Gastrocnemius medialis (tissue), 4 donors: ENCODE measurements at regions of chr19 and their contacts with region 1.

Region 1: DNA sequence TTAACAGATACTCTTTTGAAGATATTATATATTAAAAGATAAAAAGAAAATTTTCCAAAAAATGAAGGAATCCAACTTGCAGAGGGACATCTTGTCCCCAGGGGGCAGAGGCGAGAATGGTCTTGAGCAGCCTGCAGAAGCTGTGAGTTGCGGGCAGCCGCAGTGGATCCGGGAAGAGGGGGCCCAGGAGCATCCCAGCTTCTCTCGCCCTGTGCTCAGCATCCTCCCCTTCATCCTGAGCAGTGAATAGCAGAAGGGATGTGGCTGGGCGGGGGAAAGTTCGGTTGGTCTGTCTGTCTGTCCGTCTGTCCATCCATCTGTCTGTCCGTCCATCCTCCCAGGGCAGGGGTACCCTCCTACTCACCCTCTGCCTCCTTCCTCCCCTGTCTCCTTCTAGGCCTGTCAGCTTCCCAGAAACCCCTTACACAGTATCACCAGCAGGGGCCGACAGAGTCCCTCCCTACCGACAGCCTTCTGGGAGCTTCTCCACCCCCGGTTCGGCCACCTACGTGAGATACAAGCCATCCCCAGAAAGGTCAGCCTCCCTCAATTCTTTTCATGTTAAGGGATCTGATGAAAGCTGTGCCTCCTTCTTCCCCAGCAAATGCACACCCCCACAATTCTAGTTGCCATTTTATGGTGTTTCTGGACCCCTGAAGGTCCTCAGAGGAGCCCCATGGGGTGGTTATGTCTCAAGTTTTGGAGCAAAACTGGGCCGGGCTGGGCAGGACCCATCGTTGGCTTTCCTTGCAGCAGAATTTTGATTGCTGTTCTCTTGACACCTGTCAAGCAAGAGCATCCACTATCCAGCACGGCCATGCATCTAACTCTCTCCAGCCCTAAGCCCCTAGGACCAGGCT is 81.6 kb downstream of the DPF1 start:
- DNase-seq: peak; percentile 38 to 60
- ATAC-seq: peak; percentile 69 to 82
- H3K4me3 ChIP-seq: no peak overlapping the region
- H3K27ac ChIP-seq: no peak overlapping the region
- H3K4me1 ChIP-seq: peaks cover 0 to 11% of the 10 kb centered on the region in 2 donors
- H3K27me3 ChIP-seq: no peaks in the 10 kb centered on the region
- CTCF ChIP-seq: peak; percentile 52 to 81 (median 70)
- POLR2A ChIP-seq: no peak

Region 2: GRCh38 chr19:38229585-38230073 is 87.2 kb after region 1 on chr19:
- in situ Hi-C with region 1: no loop called
- intact Hi-C with region 1: loop called (anchors 5 kb)
- DNase-seq: no peak
- ATAC-seq: peak in 1 of 2 donors; percentile 27
- H3K4me3 ChIP-seq: no peak overlapping the region
- H3K27ac ChIP-seq: no peak overlapping the region
- H3K4me1 ChIP-seq: peaks cover 0 to 15% of the 10 kb centered on the region in 2 donors
- H3K27me3 ChIP-seq: peaks cover 39 to 54% (median 50%) of the 10 kb centered on the region in 3 donors
- CTCF ChIP-seq: no peak
- POLR2A ChIP-seq: no peak

Region 3: DNA sequence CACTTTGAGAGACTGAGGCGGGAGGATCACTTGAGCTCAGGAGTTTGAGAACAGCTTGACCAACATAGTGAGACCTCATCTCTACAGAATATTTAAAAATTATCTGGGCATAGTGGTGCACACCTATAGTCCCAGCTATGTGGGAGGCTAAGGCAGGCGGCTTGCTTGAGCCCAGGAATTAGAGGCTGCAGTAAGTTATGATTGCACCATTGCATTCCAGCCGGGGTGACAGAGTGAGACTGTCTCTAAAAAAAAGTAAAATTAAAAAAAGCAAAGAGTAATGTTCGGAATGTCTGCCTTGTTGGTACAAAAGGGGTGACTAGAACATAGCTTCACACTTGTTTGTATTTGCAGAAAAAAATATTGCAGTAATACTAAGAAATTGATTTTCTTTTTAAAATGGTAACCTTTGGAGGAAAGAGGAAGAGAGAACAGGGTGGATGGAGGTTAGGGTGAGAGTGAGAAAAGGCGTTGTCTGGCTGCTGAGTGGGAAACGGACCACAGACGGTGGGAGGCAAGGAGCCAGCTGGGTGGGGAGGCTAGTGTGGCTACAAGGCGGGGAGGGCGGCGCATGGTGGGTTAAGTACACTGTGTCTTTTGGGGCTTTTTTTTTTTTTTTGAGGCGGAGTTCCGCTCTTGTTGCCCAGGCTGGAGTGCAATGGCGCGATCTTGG is 103.6 kb after region 1 on chr19:
- in situ Hi-C with region 1: no loop called
- intact Hi-C with region 1: loop called (anchors 1 kb)
- DNase-seq: no peak
- ATAC-seq: no peak
- H3K4me3 ChIP-seq: no peak overlapping the region
- H3K27ac ChIP-seq: peak overlapping the region in 3 of 4 donors; percentile 25 to 41 (median 30)
- H3K4me1 ChIP-seq: peaks cover 3 to 6% of the 10 kb centered on the region in 2 donors
- H3K27me3 ChIP-seq: peaks cover 0 to 6% (median 0%) of the 10 kb centered on the region in 3 donors
- CTCF ChIP-seq: no peak
- POLR2A ChIP-seq: no peak